Thyroid gland (tissue), 4 donors: ENCODE measurements at regions of chr1 and their contacts with region 1.

Region 1: DNA sequence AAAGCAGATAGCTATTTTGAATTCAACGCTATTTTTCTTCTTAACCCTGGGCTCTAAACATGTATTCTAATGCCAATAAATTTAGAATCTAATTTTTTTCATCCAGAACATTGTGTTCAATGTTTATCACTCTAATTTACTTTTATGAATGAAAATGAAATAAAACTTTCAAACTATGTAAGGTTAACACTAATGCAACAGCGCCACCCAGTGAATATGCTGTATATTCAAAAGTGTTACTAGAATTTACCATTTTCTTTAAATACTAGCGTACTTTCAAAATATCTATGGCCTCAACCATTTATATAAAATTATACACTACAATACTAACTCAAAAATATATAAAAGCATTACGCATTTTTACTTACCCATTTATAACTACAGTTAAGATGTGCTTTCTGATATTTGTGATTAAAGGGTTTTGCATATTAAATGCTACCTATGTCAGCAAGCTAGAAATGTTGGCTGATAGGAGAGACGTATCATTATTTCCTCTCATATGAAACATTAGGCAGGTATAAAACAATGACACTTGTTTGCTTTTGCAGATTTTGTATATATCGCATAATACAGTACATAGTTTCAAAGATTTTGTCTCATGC is 5.9 kb upstream of the NUF2 start:
- DNase-seq: peak in 1 of 2 donors; percentile 12
- H3K4me3 ChIP-seq: no peak overlapping the region
- H3K27ac ChIP-seq: no peak overlapping the region
- H3K4me1 ChIP-seq: peaks cover 2 to 3% of the 10 kb centered on the region in 2 donors
- H3K27me3 ChIP-seq: no peaks in the 10 kb centered on the region
- CTCF ChIP-seq: peak in 5 of 6 experiments; percentile 10 to 65 (median 52)
- POLR2A ChIP-seq: no peak

Region 2: GRCh38 chr1:162854245-162854882 is 461.5 kb before region 1 on chr1:
- intact Hi-C with region 1: loop called (anchors 10 kb)
- DNase-seq: peak; percentile 54 to 66
- H3K4me3 ChIP-seq: no peak overlapping the region
- H3K27ac ChIP-seq: no peak overlapping the region
- H3K4me1 ChIP-seq: peaks cover 0 to 7% of the 10 kb centered on the region in 2 donors
- H3K27me3 ChIP-seq: no peaks in the 10 kb centered on the region
- CTCF ChIP-seq: peak; percentile 28 to 76 (median 56)
- POLR2A ChIP-seq: no peak

Region 3: DNA sequence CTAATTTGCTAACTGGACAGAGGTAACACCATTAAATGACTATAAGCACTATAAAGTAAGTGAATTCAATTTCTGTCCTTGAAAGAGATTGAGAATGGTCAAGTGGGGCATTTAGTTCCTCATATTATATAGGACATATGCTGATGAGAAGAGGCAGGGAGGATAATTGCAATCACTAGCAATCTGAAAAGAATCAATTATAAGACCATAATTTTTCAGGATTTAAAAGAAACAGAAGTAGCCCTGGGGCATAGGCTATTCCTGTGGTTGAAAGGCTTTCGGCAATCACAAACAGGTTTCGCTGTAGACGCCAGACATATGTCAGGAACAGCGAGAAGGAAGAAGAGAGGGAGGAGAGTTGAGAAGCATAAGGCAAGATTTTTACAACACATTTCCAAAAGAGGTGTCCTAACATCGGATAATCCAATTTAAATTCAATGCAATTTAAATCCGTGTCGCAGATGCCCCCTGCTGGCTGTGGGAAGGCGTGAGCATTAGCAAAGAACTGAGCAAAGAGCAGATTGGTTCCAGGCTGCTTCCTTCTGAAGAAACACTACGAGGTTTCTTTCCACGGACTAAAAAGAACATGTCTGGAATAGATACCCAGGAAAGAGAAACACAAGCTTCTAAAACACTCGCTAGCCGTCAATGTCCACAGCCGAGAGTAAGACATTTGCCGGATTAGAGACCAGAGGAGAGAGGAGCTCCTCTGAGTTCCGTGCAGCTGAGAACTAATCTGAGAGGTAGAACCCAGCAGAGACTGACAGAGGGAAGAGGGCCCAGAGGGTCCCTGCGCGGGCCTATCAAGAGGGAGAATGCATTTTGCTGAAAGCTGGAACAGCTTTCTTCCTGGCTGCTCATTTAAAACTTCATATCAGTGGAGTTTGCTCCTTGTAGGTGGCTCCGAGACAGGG is 141.1 kb before region 1 on chr1:
- intact Hi-C with region 1: loop called (anchors 5 kb)
- DNase-seq: peak; percentile 50 to 63
- H3K4me3 ChIP-seq: no peak overlapping the region
- H3K27ac ChIP-seq: no peak overlapping the region
- H3K4me1 ChIP-seq: peaks cover 0 to 3% of the 10 kb centered on the region in 2 donors
- H3K27me3 ChIP-seq: no peaks in the 10 kb centered on the region
- CTCF ChIP-seq: peak; percentile 32 to 85 (median 72)
- POLR2A ChIP-seq: no peak